ENCODE measurements at regions of chr11 and their contacts with region 1.

Region 1: GRCh38 chr11:125253795-125254525 is 89.4 kb downstream of the PKNOX2 start:
- DNase-seq: peak; percentile 71

Region 2: GRCh38 chr11:125287491-125288210 is 33.7 kb after region 1 on chr11:
- intact Hi-C with region 1: loop called in 1 of 2 experiments (anchors 1 kb)
- DNase-seq: peak; percentile 86

Measured in posterior vena cava (tissue), 2 donors.